AG04449 (cell line): ENCODE measurements at regions of chr7 and their contacts with region 1.

Region 1: DNA sequence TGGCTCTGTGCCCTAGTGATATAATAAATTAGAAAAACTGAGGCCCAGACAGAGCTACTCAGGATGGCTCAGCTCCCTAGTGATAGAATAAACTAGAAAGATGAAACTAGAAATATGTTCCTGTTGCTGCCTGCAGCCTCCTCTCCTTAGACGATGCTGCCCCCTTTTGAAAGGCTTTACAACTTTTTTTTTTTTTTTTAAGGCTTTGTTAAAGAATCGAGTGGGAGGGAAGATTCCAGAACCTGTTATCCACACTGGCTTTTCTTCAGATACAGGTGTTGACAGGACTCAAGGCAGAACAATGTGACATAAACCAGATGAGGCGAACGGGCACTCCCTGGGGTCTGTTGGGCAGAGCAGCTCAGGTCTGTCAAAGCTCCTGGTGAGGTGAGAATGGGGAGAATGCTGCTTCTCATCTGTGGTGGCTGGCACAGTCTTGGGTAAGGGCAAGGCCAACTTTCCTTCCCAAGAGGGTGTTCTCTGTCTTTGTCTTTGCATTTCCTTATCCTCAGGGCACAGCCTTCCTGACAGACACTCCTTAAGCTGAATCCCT is 175.1 kb downstream of the COBL start:
- DNase-seq: no peak
- H3K4me3 ChIP-seq: no peak overlapping the region
- CTCF ChIP-seq: peak; percentile 52

Region 2: DNA sequence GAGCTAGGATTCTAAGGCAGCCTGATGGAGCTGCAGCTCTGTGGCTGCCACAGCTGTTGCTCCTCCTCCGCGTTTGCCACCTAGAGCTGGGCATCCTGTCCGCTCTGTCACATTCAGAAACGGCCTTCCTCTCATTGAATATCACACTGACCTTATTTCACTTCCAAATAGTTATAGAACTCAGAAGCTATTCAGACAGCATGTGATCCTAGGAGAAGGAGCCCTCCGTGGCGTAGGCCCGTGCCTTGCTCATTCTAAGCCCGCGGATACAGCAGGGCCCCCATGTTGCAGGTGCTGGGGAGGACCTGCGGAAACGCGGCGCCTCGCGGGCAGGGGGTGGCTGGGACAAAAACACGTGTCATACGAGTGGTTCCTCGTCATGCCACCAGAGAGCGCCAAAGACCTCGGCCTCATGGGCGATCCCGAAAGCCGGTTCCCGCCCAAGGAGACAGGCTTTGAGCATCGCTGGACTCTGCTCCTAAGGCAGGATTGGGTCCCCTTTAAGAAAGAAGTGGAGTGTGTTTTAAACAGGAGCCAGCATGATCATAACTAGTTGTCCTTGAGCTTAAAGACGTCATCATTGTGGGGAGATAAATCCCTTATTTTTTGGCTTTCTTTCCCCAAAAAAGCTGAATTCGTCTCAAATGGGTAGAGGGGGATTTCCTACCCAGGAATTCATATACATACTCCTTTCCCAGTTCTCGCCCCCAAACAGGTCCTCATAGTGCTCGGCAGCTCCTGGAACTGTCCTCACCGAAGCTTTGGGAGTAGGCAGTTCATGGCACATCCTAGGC is 673.5 kb before region 1 on chr7:
- CTCF ChIA-PET with region 1: interaction called, 119 read pairs
- POLR2A ChIA-PET with region 1: no interaction called
- DNase-seq: no peak
- H3K4me3 ChIP-seq: 0 out of 2 replicates have a peak overlapping the region, but pooled peaks have one; percentile 15
- CTCF ChIP-seq: peak; percentile 90

Region 3: DNA sequence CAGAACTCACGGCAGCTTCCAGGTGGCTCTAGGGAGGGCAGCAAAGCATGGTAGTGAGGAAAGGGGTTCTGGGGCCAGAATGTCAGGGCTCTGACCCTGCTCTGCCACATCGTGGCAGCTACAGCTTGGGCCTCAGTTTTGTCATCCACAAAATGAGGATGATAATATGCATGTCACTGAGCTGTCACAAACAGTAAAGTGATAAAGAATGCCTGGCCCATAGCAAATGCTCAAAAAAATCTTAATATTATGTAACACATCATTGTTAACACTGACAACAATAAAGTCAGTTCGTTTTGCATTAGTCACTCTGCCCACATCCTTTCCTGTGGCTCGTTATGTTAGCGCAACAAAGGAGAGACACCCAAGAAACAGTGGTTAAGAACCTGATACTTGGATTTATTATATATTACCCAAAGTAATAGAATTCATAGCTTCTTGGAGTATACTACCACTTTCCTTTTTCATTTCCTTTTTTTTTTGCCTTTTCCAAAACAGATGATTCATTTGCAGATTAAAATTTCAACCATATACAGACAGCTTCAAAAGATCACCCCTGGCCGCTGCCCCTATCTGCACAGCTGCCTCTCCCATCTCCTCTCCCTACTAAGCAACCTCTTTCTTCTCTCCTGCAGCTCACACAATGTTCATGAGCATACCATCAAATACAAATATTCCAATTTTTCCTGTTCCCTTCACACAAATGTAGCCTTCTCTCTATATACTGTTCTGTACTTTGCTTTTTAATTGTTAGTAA is 530.8 kb before region 1 on chr7:
- CTCF ChIA-PET with region 1: interaction called, 24 read pairs
- POLR2A ChIA-PET with region 1: no interaction called
- DNase-seq: no peak
- H3K4me3 ChIP-seq: no peak overlapping the region
- CTCF ChIP-seq: no peak

Region 4: DNA sequence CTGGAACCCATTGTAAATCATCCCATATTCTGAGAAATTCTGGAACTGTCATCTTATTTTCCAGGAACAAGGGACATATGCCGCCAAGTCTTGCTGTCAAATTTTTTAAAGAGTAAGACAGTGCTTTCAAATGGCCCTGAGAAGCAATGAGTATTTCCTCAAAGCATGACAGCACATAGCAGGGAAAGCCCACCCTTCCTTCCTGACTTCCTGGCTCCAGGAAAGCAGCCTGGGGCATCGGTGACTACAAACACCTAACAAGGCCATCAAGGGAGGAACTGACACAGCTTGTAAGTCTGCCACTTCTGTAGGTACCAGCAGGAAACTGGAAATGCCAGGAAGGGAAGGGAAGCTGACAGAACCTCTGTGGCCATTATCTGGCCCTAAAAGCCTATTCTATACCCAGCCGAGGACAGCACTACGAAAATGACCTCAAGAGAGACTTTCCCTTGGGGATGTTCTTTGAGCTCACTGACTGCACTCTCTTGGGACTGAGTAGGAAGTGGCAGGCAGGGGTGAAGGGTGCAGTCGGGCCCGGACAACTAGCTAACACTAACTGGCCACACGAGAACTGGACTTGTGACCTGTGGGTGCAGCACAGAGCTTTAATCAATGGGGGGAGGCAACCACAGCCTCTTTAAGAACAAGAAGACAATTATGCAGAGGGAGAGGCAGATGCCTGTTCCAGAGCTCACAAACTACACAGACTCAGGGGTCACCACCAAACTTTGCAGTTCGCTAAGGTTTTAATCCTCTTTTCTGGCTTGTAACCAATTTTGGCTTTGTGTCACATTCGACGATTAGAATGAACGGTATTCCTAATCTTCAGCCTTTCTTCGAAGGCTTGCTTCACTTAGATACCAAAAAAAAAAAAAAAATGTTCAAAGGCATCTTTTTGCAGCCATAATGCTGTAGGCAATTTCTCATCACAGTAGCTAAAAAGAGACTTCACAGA is 410.8 kb before region 1 on chr7:
- CTCF ChIA-PET with region 1: interaction called, 12 read pairs
- POLR2A ChIA-PET with region 1: no interaction called
- DNase-seq: no peak
- H3K4me3 ChIP-seq: no peak overlapping the region
- CTCF ChIP-seq: no peak

Region 5: DNA sequence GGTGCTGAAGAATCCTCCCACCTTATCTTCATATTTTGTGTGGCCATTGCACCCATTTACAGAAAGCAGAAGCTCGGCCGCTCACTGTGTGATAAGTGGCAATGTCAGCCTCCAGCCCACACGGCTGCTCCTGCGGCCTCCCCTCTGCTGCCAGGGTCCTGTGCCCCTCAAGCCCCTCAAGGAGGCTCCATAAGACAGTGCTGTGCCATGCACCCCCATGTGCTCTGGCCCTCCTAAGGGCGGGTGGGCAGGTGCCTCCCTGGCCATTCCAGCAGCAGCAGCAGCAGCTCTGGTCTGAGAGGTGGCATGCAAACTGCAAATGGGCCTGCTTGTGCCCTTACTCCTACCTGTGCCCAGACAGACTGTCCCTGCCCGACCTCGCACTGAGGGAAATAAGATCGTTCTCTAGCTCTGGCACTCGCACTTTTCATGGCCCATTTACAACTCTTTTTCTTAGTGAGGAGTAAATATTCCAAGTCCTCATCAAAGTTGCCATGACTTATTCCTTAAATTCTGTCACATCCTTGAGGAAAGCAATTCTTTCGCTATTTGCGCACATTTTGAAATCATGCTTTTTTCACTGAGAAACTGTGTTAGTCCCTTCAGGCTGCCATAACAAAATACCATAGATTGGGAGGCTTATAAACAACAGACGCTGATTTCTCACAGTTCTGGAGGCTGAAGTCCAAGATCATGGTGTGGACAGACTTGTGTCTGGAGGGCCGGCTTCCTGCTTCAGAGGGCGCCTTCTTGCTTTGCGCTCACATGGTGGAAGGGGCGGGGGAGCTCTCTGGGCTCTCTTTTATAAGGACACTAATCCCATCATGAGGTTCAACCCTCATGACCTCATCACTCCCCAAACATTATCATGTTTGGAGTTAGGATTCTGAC is 12.7 kb before region 1 on chr7:
- CTCF ChIA-PET with region 1: interaction called, 34 read pairs
- POLR2A ChIA-PET with region 1: no interaction called
- DNase-seq: no peak
- H3K4me3 ChIP-seq: no peak overlapping the region
- CTCF ChIP-seq: no peak

Region 6: GRCh38 chr7:51224811-51225612 is 83.5 kb after region 1 on chr7:
- CTCF ChIA-PET with region 1: no interaction called
- POLR2A ChIA-PET with region 1: no interaction called
- DNase-seq: no peak
- H3K4me3 ChIP-seq: no peak overlapping the region
- CTCF ChIP-seq: no peak